B cell (primary cell): ENCODE measurements at regions of chr2 and their contacts with region 1.

Region 1: GRCh38 chr2:60484133-60484645 is 69.3 kb downstream of the BCL11A start:
- DNase-seq: peak; percentile 76
- ATAC-seq: peak; percentile 68
- H3K4me3 ChIP-seq: peak overlapping the region; percentile 11 to 59 (median 48)
- H3K4me3 Mint-ChIP-seq: peak overlapping the region; percentile 79
- H3K27ac ChIP-seq: peak overlapping the region; percentile 76 to 93
- H3K27ac Mint-ChIP-seq: peak overlapping the region; percentile 88
- H3K4me1 ChIP-seq: peaks cover 99% of the 10 kb centered on the region in 2 donors
- H3K4me1 Mint-ChIP-seq: peaks cover 94% of the 10 kb centered on the region
- H3K27me3 ChIP-seq: no peaks in the 10 kb centered on the region
- H3K27me3 Mint-ChIP-seq: no peaks in the 10 kb centered on the region
- CTCF ChIP-seq: no peak

Region 2: DNA sequence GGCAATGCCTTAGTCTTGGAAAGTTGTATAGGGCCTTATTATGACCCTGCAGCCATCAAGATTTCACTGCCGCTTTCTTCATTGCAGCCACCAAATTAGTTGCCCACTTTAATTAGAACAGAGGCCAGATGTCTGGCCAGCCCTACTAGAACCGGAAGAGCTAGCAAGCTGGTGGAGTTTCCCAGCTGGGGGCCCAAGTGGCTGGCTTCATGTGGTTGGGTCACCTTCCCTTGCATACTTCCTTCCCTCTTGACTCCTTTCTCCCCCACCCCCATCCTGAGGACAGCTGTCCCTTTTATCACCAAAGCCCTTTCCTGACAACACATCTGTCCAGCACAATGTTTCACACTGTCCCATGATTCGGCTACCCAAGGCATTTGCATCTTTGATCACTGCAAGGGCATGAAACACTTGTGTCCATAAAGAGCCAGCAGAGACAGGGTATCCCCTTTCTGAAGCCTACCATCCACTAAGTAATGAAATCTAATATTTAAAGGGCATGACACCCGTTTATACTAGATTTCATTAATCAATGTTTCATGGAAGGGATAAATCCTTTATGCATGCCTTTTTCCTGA is 118.0 kb before region 1 on chr2:
- CTCF ChIA-PET with region 1: no interaction called
- POLR2A ChIA-PET with region 1: interaction called, 4 read pairs
- intact Hi-C with region 1: loop called (anchors 5 kb)
- DNase-seq: peak; percentile 60
- ATAC-seq: peak; percentile 50
- H3K4me3 ChIP-seq: peak overlapping the region in 1 of 5 experiments; percentile 41
- H3K4me3 Mint-ChIP-seq: peak overlapping the region; percentile 53
- H3K27ac ChIP-seq: peak overlapping the region; percentile 60 to 81
- H3K27ac Mint-ChIP-seq: peak overlapping the region; percentile 89
- H3K4me1 ChIP-seq: peaks cover 92 to 96% of the 10 kb centered on the region in 2 donors
- H3K4me1 Mint-ChIP-seq: peaks cover 96% of the 10 kb centered on the region
- H3K27me3 ChIP-seq: no peaks in the 10 kb centered on the region
- H3K27me3 Mint-ChIP-seq: no peaks in the 10 kb centered on the region
- CTCF ChIP-seq: no peak

Region 3: GRCh38 chr2:60498816-60499429 is 14.7 kb after region 1 on chr2:
- CTCF ChIA-PET with region 1: interaction called, 4 read pairs
- POLR2A ChIA-PET with region 1: no interaction called
- intact Hi-C with region 1: loop called (anchors 1 kb)
- DNase-seq: peak; percentile 77
- ATAC-seq: peak; percentile 68
- H3K4me3 ChIP-seq: peak overlapping the region in 1 of 5 experiments; percentile 22
- H3K4me3 Mint-ChIP-seq: peak overlapping the region; percentile 74
- H3K27ac ChIP-seq: peak overlapping the region; percentile 80 to 93
- H3K27ac Mint-ChIP-seq: peak overlapping the region; percentile 88
- H3K4me1 ChIP-seq: peaks cover 99% of the 10 kb centered on the region in 2 donors
- H3K4me1 Mint-ChIP-seq: peaks cover 96% of the 10 kb centered on the region
- H3K27me3 ChIP-seq: no peaks in the 10 kb centered on the region
- H3K27me3 Mint-ChIP-seq: no peaks in the 10 kb centered on the region
- CTCF ChIP-seq: no peak